AG04449 (cell line): ENCODE measurements at regions of chr10 and their contacts with region 1.

Region 1: DNA sequence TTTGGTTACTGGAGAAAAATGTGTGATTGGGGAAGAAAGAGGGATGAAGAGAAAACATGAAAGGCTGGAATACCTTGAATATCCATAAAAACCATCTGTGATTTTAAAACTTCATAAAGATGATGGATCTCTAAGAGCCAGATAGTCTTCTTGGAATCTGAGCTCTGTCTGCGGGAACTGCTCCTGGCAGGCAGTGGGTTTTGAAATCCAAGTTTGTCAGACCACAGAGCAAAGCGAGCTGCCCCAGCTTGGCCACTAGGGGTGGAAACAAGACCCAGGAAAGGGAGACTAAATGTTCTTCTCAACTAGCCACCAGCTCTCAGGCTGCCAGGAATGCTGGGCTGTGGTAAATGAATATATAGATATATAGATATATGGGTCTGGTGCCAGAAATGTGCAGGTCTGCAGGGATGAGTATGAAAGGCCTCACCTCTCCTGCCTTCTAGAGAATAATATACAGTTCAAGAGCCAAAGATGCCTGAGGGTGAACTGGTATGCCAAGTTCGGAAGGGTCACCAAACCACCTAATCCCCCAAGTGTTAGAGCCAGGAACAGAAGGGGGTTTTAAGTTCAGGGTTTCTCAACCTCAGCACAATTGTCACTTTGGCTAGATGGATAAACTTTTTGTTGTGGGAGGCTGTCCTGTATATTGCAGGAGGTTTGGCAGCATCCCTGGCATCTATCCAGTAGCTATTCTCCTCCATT is 208.8 kb downstream of the KCNMA1 start:
- DNase-seq: peak; percentile 51
- H3K4me3 ChIP-seq: no peak overlapping the region
- CTCF ChIP-seq: peak; percentile 87

Region 2: DNA sequence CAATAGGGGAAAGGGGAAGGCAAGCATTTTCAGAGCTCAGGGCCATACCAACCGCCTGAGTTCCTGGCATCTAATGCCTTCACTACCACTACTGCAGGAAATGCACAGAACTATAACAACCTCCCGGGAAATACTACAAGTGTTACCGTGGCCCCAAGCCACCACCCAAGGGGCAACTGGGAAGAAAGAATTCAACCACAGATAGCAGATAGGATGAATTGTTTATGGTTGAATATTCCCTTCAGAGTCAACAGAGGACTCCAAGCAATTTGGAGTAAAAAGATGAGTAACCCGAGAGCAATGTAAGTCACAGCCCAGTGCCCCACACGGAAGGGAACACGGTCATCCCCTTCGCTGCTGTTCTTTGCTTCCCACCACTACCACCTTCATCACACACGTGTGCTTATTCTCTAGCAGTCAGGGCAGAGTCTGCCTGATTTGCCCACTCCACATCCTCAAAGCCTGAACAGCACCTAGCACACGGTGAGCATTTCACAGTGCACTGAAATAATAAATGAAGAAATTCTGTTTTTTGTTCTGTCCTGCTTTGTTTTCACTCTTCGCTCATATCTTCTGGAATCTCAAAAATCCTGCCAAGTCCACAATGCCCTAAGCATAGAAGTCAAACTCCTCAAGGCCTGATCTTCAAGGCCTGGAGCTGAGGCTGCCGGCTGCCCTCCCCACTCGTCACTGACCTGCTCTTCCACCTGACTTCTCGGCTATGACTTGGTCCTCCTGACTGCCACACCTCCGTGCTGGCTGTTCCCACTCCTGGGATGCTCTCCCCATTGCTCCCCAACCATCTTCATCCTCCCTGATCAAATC is 12.3 kb before region 1 on chr10:
- CTCF ChIA-PET with region 1: interaction called, 43 read pairs
- POLR2A ChIA-PET with region 1: interaction called, 3 read pairs
- DNase-seq: peak; percentile 86
- H3K4me3 ChIP-seq: peak overlapping the region; percentile 3; the same call in 1 of the 2 replicates
- CTCF ChIP-seq: no peak

Region 3: GRCh38 chr10:77441353-77442166 is 12.7 kb after region 1 on chr10:
- CTCF ChIA-PET with region 1: interaction called, 54 read pairs
- POLR2A ChIA-PET with region 1: no interaction called
- DNase-seq: no peak
- H3K4me3 ChIP-seq: no peak overlapping the region
- CTCF ChIP-seq: no peak

Region 4: DNA sequence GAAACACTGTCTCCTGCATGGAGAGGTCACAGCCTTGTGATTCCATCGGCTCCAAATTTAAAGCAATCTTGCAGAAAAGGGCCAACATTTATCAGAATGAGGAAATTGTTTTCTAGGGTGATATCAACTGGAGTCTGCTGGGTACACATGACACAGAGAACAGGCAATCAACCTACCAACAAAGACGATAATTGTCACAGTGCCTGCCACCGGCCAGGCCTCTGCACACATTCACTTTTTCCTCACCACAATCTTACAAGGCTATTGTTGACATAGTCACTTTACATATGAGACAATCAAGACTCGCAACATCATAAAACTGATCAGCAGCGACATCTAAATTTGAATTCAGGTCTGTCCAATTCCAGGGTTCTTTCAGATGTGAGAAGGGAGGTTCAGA is 19.4 kb after region 1 on chr10:
- CTCF ChIA-PET with region 1: interaction called, 19 read pairs
- POLR2A ChIA-PET with region 1: no interaction called
- DNase-seq: no peak
- H3K4me3 ChIP-seq: no peak overlapping the region
- CTCF ChIP-seq: no peak